ENCODE measurements at regions of chr3 and their contacts with region 1.

Region 1: DNA sequence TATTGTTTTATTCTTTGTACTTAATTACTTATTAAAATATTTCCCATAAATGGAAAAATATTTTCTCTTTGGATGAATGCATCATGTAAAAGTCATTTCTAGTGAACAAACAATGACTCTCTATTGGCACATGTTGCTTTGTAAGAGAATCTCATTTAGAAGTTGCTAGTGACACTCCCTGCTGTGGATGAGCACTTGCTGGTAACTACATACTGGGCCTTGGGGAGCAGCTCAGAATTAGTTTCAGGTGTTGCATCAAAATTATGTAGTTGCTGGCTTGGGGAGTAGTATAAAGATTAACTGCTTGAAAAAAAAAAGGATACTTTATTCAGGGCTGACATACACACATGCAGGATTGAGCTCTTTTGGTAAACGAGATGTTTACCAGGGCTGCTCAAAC is 80.3 kb upstream of the KCNAB1 start:
- DNase-seq: no peak
- H3K4me3 ChIP-seq: no peak overlapping the region
- H3K27ac ChIP-seq: no peak overlapping the region
- H3K4me1 ChIP-seq: no peaks in the 10 kb centered on the region
- H3K27me3 ChIP-seq: no peaks in the 10 kb centered on the region
- CTCF ChIP-seq: no peak

Region 2: DNA sequence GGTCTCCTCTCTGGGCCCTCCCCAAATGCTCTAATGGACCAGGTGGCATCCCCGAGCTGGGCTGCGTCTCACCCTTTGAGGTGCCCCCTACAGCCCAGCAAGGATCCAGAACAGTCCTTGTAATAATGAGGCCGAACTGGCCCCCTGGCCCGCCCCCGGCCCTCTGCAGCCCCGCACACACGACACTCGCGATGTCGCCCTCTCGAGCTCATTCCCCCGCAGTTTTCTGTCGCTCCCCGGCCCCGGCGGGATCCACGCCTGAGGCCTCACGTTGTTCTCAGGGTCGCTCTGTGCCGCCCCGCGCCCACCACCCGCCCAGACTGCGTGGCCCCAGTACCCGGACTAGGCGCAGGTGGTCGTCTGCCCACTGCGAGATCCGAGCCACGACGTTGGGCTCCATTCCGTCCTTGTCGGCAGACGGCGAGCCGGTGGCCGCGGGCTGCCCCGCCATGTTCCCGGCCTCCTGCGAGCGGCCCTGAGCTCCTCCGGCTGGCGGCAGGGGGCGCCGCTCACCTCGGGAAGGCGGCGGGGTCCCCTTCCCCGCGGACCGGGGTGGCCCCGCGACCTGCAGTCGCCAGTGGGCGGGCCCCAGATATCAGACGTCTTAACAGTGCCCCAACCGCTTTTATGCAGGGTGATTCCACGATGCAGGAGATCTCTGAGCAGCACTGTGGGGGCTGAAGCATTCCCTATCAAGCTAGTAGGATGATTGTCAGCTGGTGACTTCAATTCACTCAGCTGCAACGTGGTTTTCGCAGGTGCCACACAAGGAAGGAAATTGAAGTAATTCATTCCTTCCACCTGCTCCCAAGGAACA is 234.0 kb before region 1 on chr3 and contains the start of gene C3orf33:
- CTCF ChIA-PET with region 1: interaction called, 21 read pairs
- POLR2A ChIA-PET with region 1: no interaction called
- intact Hi-C with region 1: no loop called
- DNase-seq: peak; percentile 64 to 79
- H3K4me3 ChIP-seq: peak within 1 kb of the TSS; percentile 91
- H3K27ac ChIP-seq: no peak within 1 kb of the TSS
- H3K4me1 ChIP-seq: peaks cover 5% of the 10 kb centered on the region; the same call in 1 of the 2 replicates
- H3K27me3 ChIP-seq: no peaks in the 10 kb centered on the region
- CTCF ChIP-seq: peak; percentile 92
- total RNA-seq, gene C3orf33: 1.1 and 2.3 TPM in 2 replicates

Region 3: GRCh38 chr3:156135921-156136638 is 96.0 kb after region 1 on chr3:
- CTCF ChIA-PET with region 1: no interaction called
- POLR2A ChIA-PET with region 1: no interaction called
- intact Hi-C with region 1: loop called (anchors 10 kb)
- DNase-seq: no peak
- H3K4me3 ChIP-seq: no peak overlapping the region
- H3K27ac ChIP-seq: no peak overlapping the region
- H3K4me1 ChIP-seq: no peaks in the 10 kb centered on the region
- H3K27me3 ChIP-seq: no peaks in the 10 kb centered on the region
- CTCF ChIP-seq: peak; percentile 52; the same call in 1 of the 2 replicates